ENCODE measurements at regions of chr13 and their contacts with region 1.

Region 1: GRCh38 chr13:51995677-51996551 is 15.3 kb downstream of the ATP7B start:
- DNase-seq: peak in 4 of 5 donors; percentile 27 to 65 (median 37)
- ATAC-seq: peak; percentile 71 to 82 (median 80)
- H3K4me3 ChIP-seq: peak overlapping the region in 1 of 12 donors; percentile 8
- H3K27ac ChIP-seq: peak overlapping the region in 9 of 12 donors; percentile 30 to 68 (median 47)
- H3K4me1 ChIP-seq: peaks cover 0 to 43% (median 20%) of the 10 kb centered on the region in 12 donors
- H3K27me3 ChIP-seq: no peaks in the 10 kb centered on the region
- CTCF ChIP-seq: no peak
- POLR2A ChIP-seq: no peak

Region 2: GRCh38 chr13:51814825-51815650 is 180.9 kb before region 1 on chr13:
- intact Hi-C with region 1: loop called in 2 of 10 experiments (anchors 10 kb)
- DNase-seq: peak; percentile 45 to 63 (median 60)
- ATAC-seq: peak; percentile 13 to 69 (median 60)
- H3K4me3 ChIP-seq: peak overlapping the region in 9 of 12 donors; percentile 8 to 39 (median 19)
- H3K27ac ChIP-seq: peak overlapping the region in 4 of 12 donors; percentile 17 to 42 (median 22)
- H3K4me1 ChIP-seq: peaks cover 0 to 40% (median 13%) of the 10 kb centered on the region in 12 donors
- H3K27me3 ChIP-seq: no peaks in the 10 kb centered on the region
- CTCF ChIP-seq: peak; percentile 68 to 88 (median 82)
- POLR2A ChIP-seq: no peak

Region 3: GRCh38 chr13:51895906-51896888 is 99.7 kb before region 1 on chr13:
- intact Hi-C with region 1: loop called in 1 of 10 experiments (anchors 5 kb)
- DNase-seq: peak in 4 of 5 donors; percentile 40 to 65 (median 50)
- ATAC-seq: peak; percentile 76 to 90 (median 88)
- H3K4me3 ChIP-seq: no peak overlapping the region
- H3K27ac ChIP-seq: no peak overlapping the region
- H3K4me1 ChIP-seq: no peaks in the 10 kb centered on the region
- H3K27me3 ChIP-seq: no peaks in the 10 kb centered on the region
- CTCF ChIP-seq: peak; percentile 52 to 80 (median 66)
- POLR2A ChIP-seq: no peak

Region 4: DNA sequence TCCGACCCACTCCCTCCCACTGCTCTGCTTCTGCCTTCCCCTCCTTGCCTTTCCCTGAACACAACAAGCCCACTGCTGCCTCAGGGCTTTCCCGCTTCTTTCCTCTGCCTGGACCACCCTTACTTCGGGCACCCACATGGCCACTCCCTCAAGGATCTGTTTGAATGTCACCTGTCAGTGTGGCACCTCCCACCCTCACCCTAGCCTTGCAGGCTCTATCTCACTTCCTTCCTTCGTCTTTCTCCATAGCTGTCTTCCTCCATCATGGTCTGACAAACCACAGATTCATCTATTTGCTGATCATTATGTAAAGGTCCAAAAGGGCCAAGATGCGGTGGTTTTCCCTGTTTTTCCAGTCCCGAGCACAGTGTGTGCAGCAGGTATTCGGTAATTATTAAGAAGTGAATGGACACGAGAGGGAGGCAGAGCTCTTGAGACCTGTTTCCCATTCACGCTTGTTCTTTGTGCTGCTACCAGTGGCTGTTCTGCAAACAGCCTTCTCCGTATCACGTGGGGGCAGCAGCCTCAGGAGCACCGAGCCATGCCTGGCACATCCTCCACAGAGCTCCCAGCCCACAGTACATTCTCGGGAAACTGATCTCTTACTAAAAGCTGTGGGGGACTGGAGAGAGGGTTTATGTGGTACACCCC is 83.9 kb before region 1 on chr13:
- intact Hi-C with region 1: loop called in 1 of 10 experiments (anchors 5 kb)
- DNase-seq: no peak
- ATAC-seq: peak; percentile 63 to 92 (median 78)
- H3K4me3 ChIP-seq: no peak overlapping the region
- H3K27ac ChIP-seq: no peak overlapping the region
- H3K4me1 ChIP-seq: peaks cover 0 to 4% (median 1%) of the 10 kb centered on the region in 12 donors
- H3K27me3 ChIP-seq: no peaks in the 10 kb centered on the region
- CTCF ChIP-seq: peak in 2 of 12 donors; percentile 10 to 35
- POLR2A ChIP-seq: no peak

Region 5: DNA sequence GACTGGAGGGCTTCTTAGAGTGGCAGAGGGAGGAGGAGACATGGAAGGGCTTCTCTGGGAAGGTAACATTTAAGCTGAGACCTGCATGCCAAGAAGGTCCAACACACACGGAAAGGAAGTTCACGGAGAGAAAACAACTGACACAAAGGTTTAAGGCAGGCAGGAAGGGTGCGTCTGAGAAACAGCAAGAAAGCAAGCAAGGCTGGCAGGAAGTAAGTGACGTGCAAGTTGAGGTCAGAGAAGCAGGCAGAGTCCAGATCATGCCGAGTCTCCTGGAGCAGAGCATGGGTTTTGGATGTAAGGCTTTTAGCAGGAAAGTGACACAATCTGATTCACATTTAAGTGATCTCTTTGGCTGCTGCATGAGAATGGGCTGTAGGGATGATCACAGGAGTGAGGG is 45.2 kb before region 1 on chr13:
- intact Hi-C with region 1: loop called in 1 of 10 experiments (anchors 5 kb)
- DNase-seq: peak in 3 of 5 donors; percentile 41 to 54 (median 51)
- ATAC-seq: peak in 3 of 4 donors; percentile 41 to 91 (median 72)
- H3K4me3 ChIP-seq: no peak overlapping the region
- H3K27ac ChIP-seq: peak overlapping the region in 11 of 12 donors; percentile 8 to 77 (median 51)
- H3K4me1 ChIP-seq: peaks cover 0 to 6% (median 0%) of the 10 kb centered on the region in 12 donors
- H3K27me3 ChIP-seq: no peaks in the 10 kb centered on the region
- CTCF ChIP-seq: no peak
- POLR2A ChIP-seq: no peak

Region 6: GRCh38 chr13:52034616-52035226 is 38.8 kb after region 1 on chr13:
- intact Hi-C with region 1: no loop called
- DNase-seq: no peak
- ATAC-seq: no peak
- H3K4me3 ChIP-seq: no peak overlapping the region
- H3K27ac ChIP-seq: no peak overlapping the region
- H3K4me1 ChIP-seq: no peaks in the 10 kb centered on the region
- H3K27me3 ChIP-seq: no peaks in the 10 kb centered on the region
- CTCF ChIP-seq: no peak
- POLR2A ChIP-seq: no peak

Region 7: GRCh38 chr13:52048516-52048915 is 52.6 kb after region 1 on chr13:
- intact Hi-C with region 1: no loop called
- DNase-seq: no peak
- ATAC-seq: no peak
- H3K4me3 ChIP-seq: no peak overlapping the region
- H3K27ac ChIP-seq: no peak overlapping the region
- H3K4me1 ChIP-seq: no peaks in the 10 kb centered on the region
- H3K27me3 ChIP-seq: no peaks in the 10 kb centered on the region
- CTCF ChIP-seq: no peak
- POLR2A ChIP-seq: no peak

Measured in heart left ventricle (tissue), 16 donors.